H1 (cell line): ENCODE measurements at regions of chr15 and their contacts with region 1.

Region 1: DNA sequence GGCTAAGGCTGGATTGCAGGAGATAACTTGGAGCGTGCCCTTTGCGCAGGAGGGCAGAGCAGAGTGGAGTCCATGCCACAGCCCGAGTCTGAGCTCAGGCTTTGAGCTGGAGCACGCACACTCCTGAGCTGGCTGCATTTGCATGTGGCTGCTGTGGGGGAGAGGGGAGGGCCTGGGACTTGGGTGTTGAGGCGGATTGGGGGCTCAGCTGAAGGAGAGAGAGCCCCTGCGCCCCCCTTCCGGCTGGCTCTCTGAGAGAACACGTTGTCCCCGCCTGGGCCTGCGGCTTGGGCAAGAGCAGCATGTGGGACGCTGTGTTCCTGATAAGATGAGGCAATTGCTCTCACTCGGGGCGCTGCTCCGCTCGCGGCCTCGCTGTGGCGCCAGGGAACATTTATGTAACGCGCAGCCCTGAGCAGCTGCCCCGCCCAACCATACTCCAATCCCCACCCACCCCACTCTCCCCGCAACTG is 39.1 kb downstream of the KLF13 start:
- DNase-seq: peak; percentile 44 to 78
- H3K4me3 ChIP-seq: peak overlapping the region in 1 of 4 experiments; percentile 32; a peak in 1 of 8 replicates
- H3K27ac ChIP-seq: no peak overlapping the region
- H3K4me1 ChIP-seq: peaks cover 8 to 53% (median 45%) of the 10 kb centered on the region in 4 experiments
- H3K27me3 ChIP-seq: no peaks in the 10 kb centered on the region
- CTCF ChIP-seq: peak; percentile 37 to 48 (median 44)
- EP300 ChIP-seq: no peak
- POLR2A ChIP-seq: no peak
- RAD21 ChIP-seq: peak; percentile 13 to 50; a peak in 3 of 4 replicates

Region 2: DNA sequence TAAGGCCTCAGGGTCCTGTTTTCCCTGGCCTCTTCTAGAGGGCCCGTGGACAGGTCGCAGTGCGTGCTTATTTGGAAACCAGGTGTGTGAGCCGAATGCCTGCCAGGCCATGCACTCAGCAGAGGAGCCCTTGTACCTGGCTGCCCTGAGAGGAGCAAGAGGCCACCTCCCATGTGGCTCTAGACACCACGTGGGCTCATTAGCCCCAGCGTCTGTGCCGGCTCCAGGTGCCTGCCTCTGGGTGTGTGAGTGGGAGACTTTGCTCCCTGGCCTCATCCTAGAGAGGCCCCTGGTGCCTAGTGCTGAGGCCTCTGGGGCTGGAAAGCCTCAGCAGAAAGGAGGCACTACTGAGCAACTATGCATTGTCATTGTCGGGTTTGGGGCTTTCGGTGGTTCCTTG is 11.3 kb after region 1 on chr15:
- CTCF ChIA-PET with region 1: interaction called, 24 read pairs
- POLR2A ChIA-PET with region 1: interaction called, 3 read pairs
- DNase-seq: no peak
- H3K4me3 ChIP-seq: no peak overlapping the region
- H3K27ac ChIP-seq: no peak overlapping the region
- H3K4me1 ChIP-seq: peaks cover 0 to 22% (median 1%) of the 10 kb centered on the region in 4 experiments; a peak in 5 of 7 replicates
- H3K27me3 ChIP-seq: no peaks in the 10 kb centered on the region
- CTCF ChIP-seq: peak in 1 of 3 experiments; percentile 26; a peak in 1 of 4 replicates
- EP300 ChIP-seq: no peak
- POLR2A ChIP-seq: no peak
- RAD21 ChIP-seq: no peak